ENCODE measurements at regions of chr6 and their contacts with region 1.

Region 1: GRCh38 chr6:161418463-161418945 is 144.6 kb upstream of the AGPAT4 start:
- DNase-seq: no peak
- ATAC-seq: peak; percentile 73
- H3K4me3 ChIP-seq: no peak overlapping the region
- H3K27ac ChIP-seq: no peak overlapping the region
- H3K4me1 ChIP-seq: no peaks in the 10 kb centered on the region
- H3K27me3 ChIP-seq: peaks cover 0 to 2% of the 10 kb centered on the region in 2 experiments; a peak in 2 of 4 replicates
- CTCF ChIP-seq: peak; percentile 46 to 71 (median 59)
- EP300 ChIP-seq: no peak
- POLR2A ChIP-seq: no peak
- RAD21 ChIP-seq: peak; percentile 77

Region 2: DNA sequence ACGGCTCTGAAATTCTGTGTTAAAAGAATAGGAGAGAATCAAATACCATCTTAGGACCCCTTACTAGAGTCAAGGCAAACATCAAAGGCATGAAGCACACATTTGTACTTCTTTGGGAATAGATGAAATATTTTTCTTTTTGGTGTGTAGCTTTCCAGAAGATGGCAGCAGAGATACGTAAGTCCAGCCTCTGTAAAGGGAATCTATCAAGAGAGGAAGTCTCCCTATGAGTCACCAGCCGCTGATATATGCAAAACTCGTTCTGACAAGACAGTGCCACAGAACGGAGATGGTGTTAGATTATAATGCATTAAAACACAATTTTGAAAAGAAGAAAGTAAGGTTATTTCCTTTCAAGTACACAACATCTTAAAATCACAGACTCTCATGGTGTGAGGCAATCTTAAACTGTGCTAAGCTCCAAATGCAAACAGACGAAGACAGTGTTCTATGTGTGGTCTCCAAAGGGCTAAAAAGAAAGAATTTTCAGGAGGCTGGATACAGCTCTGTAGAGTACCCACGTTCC is 24.6 kb before region 1 on chr6:
- CTCF ChIA-PET with region 1: interaction called, 20 read pairs
- POLR2A ChIA-PET with region 1: no interaction called
- RAD21 ChIA-PET with region 1: interaction called, 5 read pairs
- SMC1A ChIA-PET with region 1: interaction called, 6 read pairs
- in situ Hi-C with region 1: no loop called
- intact Hi-C with region 1: no loop called
- DNase-seq: peak; percentile 43
- ATAC-seq: peak; percentile 100
- H3K4me3 ChIP-seq: no peak overlapping the region
- H3K27ac ChIP-seq: no peak overlapping the region
- H3K4me1 ChIP-seq: no peaks in the 10 kb centered on the region; the same call in 1 of the 2 replicates
- H3K27me3 ChIP-seq: no peaks in the 10 kb centered on the region
- CTCF ChIP-seq: peak; percentile 42 to 81 (median 50); a peak in 5 of 6 replicates
- EP300 ChIP-seq: no peak
- POLR2A ChIP-seq: no peak
- RAD21 ChIP-seq: peak; percentile 84

Region 3: GRCh38 chr6:161406646-161407045 is 11.9 kb before region 1 on chr6:
- CTCF ChIA-PET with region 1: interaction called, 12 read pairs
- POLR2A ChIA-PET with region 1: no interaction called
- RAD21 ChIA-PET with region 1: no interaction called
- SMC1A ChIA-PET with region 1: interaction called, 3 read pairs
- in situ Hi-C with region 1: no loop called
- intact Hi-C with region 1: no loop called
- DNase-seq: no peak
- ATAC-seq: no peak
- H3K4me3 ChIP-seq: no peak overlapping the region
- H3K27ac ChIP-seq: no peak overlapping the region
- H3K4me1 ChIP-seq: no peaks in the 10 kb centered on the region
- H3K27me3 ChIP-seq: no peaks in the 10 kb centered on the region
- CTCF ChIP-seq: no peak
- EP300 ChIP-seq: no peak
- POLR2A ChIP-seq: no peak
- RAD21 ChIP-seq: no peak

Region 4: DNA sequence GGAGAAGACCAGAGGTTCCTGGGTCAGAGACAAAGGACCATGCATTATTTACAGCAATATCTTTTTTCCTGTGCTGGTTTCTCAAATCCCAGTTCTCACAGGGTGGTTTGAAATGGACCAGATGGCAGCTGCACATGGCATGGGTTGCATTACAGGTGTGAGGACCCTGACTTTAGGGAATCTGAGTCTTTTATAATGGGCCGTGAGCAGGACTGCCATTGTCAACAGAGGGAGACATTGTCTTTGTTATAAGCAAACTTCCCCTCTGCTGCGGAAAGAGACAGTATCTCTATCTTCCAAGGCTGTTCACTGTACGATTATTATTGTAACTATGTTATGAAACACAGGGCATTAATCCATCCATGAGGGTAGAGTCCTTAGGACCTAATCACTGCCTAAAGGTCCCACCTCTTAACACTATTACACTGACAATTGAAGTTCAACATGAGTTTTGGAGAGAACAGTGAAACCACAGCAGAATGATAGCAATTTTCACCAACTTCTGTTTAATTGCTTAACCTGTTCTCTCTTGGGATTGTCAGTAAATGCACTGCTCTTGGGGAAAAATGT is 11.5 kb after region 1 on chr6:
- CTCF ChIA-PET with region 1: interaction called, 15 read pairs
- POLR2A ChIA-PET with region 1: no interaction called
- RAD21 ChIA-PET with region 1: no interaction called
- SMC1A ChIA-PET with region 1: interaction called, 3 read pairs
- in situ Hi-C with region 1: no loop called
- intact Hi-C with region 1: no loop called
- DNase-seq: no peak
- ATAC-seq: no peak
- H3K4me3 ChIP-seq: no peak overlapping the region
- H3K27ac ChIP-seq: no peak overlapping the region
- H3K4me1 ChIP-seq: no peaks in the 10 kb centered on the region
- H3K27me3 ChIP-seq: no peaks in the 10 kb centered on the region
- CTCF ChIP-seq: peak in 2 of 3 experiments; percentile 7 to 10; a peak in 1 of 6 replicates
- EP300 ChIP-seq: no peak
- POLR2A ChIP-seq: no peak
- RAD21 ChIP-seq: peak; percentile 29; the same call in 1 of the 2 replicates

Region 5: GRCh38 chr6:161439093-161439492 is 20.6 kb after region 1 on chr6:
- CTCF ChIA-PET with region 1: interaction called, 16 read pairs
- POLR2A ChIA-PET with region 1: no interaction called
- RAD21 ChIA-PET with region 1: no interaction called
- SMC1A ChIA-PET with region 1: no interaction called
- in situ Hi-C with region 1: no loop called
- intact Hi-C with region 1: no loop called
- DNase-seq: no peak
- ATAC-seq: no peak
- H3K4me3 ChIP-seq: no peak overlapping the region
- H3K27ac ChIP-seq: no peak overlapping the region
- H3K4me1 ChIP-seq: no peaks in the 10 kb centered on the region
- H3K27me3 ChIP-seq: no peaks in the 10 kb centered on the region
- CTCF ChIP-seq: no peak
- EP300 ChIP-seq: no peak
- POLR2A ChIP-seq: no peak
- RAD21 ChIP-seq: no peak

Region 6: GRCh38 chr6:161694995-161695394 is 276.5 kb after region 1 on chr6:
- CTCF ChIA-PET with region 1: interaction called, 27 read pairs
- POLR2A ChIA-PET with region 1: no interaction called
- RAD21 ChIA-PET with region 1: interaction called, 12 read pairs
- SMC1A ChIA-PET with region 1: interaction called, 8 read pairs
- in situ Hi-C with region 1: loop called (anchors 10 kb)
- intact Hi-C with region 1: loop called (anchors 1 kb)
- DNase-seq: no peak
- ATAC-seq: peak; percentile 79
- H3K4me3 ChIP-seq: no peak overlapping the region
- H3K27ac ChIP-seq: no peak overlapping the region
- H3K4me1 ChIP-seq: no peaks in the 10 kb centered on the region
- H3K27me3 ChIP-seq: no peaks in the 10 kb centered on the region
- CTCF ChIP-seq: peak; percentile 50 to 57 (median 55); a peak in 5 of 6 replicates
- EP300 ChIP-seq: no peak
- POLR2A ChIP-seq: no peak
- RAD21 ChIP-seq: peak; percentile 78

Region 7: DNA sequence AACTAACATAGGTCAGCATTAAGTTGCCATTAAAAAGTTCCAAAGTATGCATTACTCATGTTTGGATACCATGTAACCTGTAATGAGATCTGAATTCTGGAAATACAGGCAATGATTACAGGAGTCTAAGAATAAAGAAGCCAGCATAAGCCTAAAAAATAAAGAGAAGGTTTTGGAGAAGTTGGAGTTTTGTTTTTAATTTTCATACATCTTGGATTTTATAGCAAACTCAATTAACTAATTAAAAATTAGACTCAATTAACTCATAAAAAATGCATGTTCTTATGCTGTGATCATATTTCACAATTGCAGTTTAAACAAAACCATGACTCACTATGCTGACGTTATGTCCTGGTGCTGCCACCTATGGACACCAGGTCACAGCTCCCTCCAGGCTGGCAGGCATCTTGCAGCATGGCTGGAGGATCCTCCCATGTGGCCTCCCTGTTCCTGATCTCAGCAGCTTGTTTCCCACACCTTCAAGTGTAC is 504.2 kb after region 1 on chr6:
- CTCF ChIA-PET with region 1: no interaction called
- POLR2A ChIA-PET with region 1: no interaction called
- RAD21 ChIA-PET with region 1: no interaction called
- SMC1A ChIA-PET with region 1: no interaction called
- in situ Hi-C with region 1: no loop called
- intact Hi-C with region 1: loop called (anchors 10 kb)
- DNase-seq: no peak
- ATAC-seq: peak; percentile 83
- H3K4me3 ChIP-seq: no peak overlapping the region
- H3K27ac ChIP-seq: no peak overlapping the region
- H3K4me1 ChIP-seq: no peaks in the 10 kb centered on the region
- H3K27me3 ChIP-seq: no peaks in the 10 kb centered on the region; a peak in 1 of 4 replicates
- CTCF ChIP-seq: peak; percentile 25 to 55 (median 39); a peak in 4 of 6 replicates
- EP300 ChIP-seq: no peak
- POLR2A ChIP-seq: no peak
- RAD21 ChIP-seq: no peak

Measured in GM12878 (cell line).